ENCODE measurements at regions of chr7 and their contacts with region 1.

Region 1: GRCh38 chr7:150974468-150975391 is 3.4 kb downstream of the KCNH2 start:
- DNase-seq: peak; percentile 70 to 90 (median 80)
- ATAC-seq: peak; percentile 77
- H3K4me3 ChIP-seq: peak overlapping the region; percentile 63 to 69
- H3K4me3 Mint-ChIP-seq: peak overlapping the region; percentile 84
- H3K27ac ChIP-seq: peak overlapping the region; percentile 24 to 82
- H3K27ac Mint-ChIP-seq: peak overlapping the region; percentile 89
- H3K4me1 ChIP-seq: peaks cover 43% of the 10 kb centered on the region
- H3K4me1 Mint-ChIP-seq: peaks cover 38% of the 10 kb centered on the region
- H3K27me3 ChIP-seq: peaks cover 17 to 20% of the 10 kb centered on the region in 2 experiments
- H3K27me3 Mint-ChIP-seq: peaks cover 18% of the 10 kb centered on the region
- CTCF ChIP-seq: peak; percentile 24

Region 2: DNA sequence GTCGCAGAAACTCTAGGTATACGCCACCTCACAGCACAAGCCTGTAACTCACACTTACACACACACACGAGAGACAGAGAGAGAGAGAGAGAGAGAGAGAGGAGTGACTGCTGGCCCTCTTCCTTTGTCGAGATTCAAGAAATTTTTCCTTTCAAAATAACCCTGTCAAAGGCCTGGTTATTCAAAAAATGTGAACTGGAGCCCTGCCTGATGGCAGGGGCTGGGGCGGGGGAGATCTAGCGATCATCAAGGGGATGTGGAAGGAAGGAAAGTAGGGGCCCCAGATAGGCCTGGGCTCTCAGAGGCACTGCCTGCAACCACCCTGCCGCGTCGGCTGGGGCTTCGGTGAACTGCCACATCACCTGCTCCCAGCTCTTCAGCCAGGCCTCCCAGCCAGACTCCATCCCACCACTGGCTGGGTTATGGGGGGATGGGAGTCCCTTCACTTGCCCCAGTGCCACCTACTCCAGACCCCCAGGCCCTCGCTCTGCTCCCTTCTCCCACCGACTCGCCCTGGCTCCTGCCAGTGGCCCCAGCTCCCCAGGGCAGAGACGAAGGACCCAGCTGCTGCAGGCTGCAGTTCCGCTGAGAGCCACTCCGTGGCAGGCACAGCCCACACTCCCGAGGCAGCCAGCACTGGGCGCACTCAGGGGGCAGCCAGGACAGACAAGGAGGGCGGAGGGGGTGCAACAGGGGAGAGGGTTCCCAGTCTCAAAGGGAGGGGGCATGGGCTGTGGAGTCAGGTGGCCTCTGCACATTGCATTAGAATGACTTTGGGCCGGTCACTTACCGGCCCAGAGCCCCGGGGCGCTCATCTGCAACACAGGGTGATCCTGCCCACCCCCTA is 12.0 kb before region 1 on chr7:
- CTCF ChIA-PET with region 1: interaction called, 10 read pairs
- POLR2A ChIA-PET with region 1: interaction called, 3 read pairs
- intact Hi-C with region 1: no loop called
- DNase-seq: peak in 8 of 9 experiments; percentile 40 to 76 (median 66)
- ATAC-seq: peak; percentile 96
- H3K4me3 ChIP-seq: no peak overlapping the region
- H3K4me3 Mint-ChIP-seq: no peak overlapping the region
- H3K27ac ChIP-seq: no peak overlapping the region
- H3K27ac Mint-ChIP-seq: no peak overlapping the region
- H3K4me1 ChIP-seq: peaks cover 5% of the 10 kb centered on the region
- H3K4me1 Mint-ChIP-seq: peaks cover 6% of the 10 kb centered on the region
- H3K27me3 ChIP-seq: peaks cover 6 to 9% of the 10 kb centered on the region in 2 experiments
- H3K27me3 Mint-ChIP-seq: peaks cover 24% of the 10 kb centered on the region
- CTCF ChIP-seq: peak; percentile 86

Region 3: GRCh38 chr7:150998341-150998740 is 23.6 kb after region 1 on chr7:
- CTCF ChIA-PET with region 1: no interaction called
- POLR2A ChIA-PET with region 1: no interaction called
- intact Hi-C with region 1: no loop called
- DNase-seq: no peak
- ATAC-seq: no peak
- H3K4me3 ChIP-seq: no peak overlapping the region
- H3K4me3 Mint-ChIP-seq: no peak overlapping the region
- H3K27ac ChIP-seq: no peak overlapping the region
- H3K27ac Mint-ChIP-seq: no peak overlapping the region
- H3K4me1 ChIP-seq: peaks cover 59% of the 10 kb centered on the region
- H3K4me1 Mint-ChIP-seq: peaks cover 38% of the 10 kb centered on the region
- H3K27me3 ChIP-seq: peaks cover 0 to 2% of the 10 kb centered on the region in 2 experiments
- H3K27me3 Mint-ChIP-seq: no peaks in the 10 kb centered on the region
- CTCF ChIP-seq: no peak

Region 4: GRCh38 chr7:151028131-151028947 is 53.6 kb after region 1 on chr7 and contains the start of gene ABCB8:
- CTCF ChIA-PET with region 1: no interaction called
- POLR2A ChIA-PET with region 1: interaction called, 4 read pairs
- intact Hi-C with region 1: loop called in 1 of 2 experiments (anchors 1 kb)
- DNase-seq: peak; percentile 93 to 99 (median 98)
- ATAC-seq: peak; percentile 92
- H3K4me3 ChIP-seq: peak within 1 kb of the TSS; percentile 67 to 75
- H3K4me3 Mint-ChIP-seq: peak within 1 kb of the TSS; percentile 96
- H3K27ac ChIP-seq: peak within 1 kb of the TSS; percentile 94 to 96
- H3K27ac Mint-ChIP-seq: peak within 1 kb of the TSS; percentile 99
- H3K4me1 ChIP-seq: peaks cover 12% of the 10 kb centered on the region
- H3K4me1 Mint-ChIP-seq: peaks cover 24% of the 10 kb centered on the region
- H3K27me3 ChIP-seq: no peaks in the 10 kb centered on the region
- H3K27me3 Mint-ChIP-seq: no peaks in the 10 kb centered on the region
- CTCF ChIP-seq: peak; percentile 35
- total RNA-seq, gene ABCB8: 43.6 to 49.3 TPM

Region 5: GRCh38 chr7:151085691-151086620 is 111.2 kb after region 1 on chr7 and contains the start of gene AGAP3:
- CTCF ChIA-PET with region 1: no interaction called
- POLR2A ChIA-PET with region 1: no interaction called
- intact Hi-C with region 1: loop called (anchors 1 to 10 kb)
- DNase-seq: peak in 7 of 9 experiments; percentile 30 to 71 (median 57)
- ATAC-seq: no peak
- H3K4me3 ChIP-seq: peak within 1 kb of the TSS; percentile 65 to 80
- H3K4me3 Mint-ChIP-seq: peak within 1 kb of the TSS; percentile 88
- H3K27ac ChIP-seq: peak within 1 kb of the TSS in 1 of 2 experiments; percentile 51
- H3K27ac Mint-ChIP-seq: peak within 1 kb of the TSS; percentile 85
- H3K4me1 ChIP-seq: peaks cover 58% of the 10 kb centered on the region
- H3K4me1 Mint-ChIP-seq: peaks cover 44% of the 10 kb centered on the region
- H3K27me3 ChIP-seq: no peaks in the 10 kb centered on the region
- H3K27me3 Mint-ChIP-seq: peaks cover 21% of the 10 kb centered on the region
- CTCF ChIP-seq: no peak
- total RNA-seq, gene AGAP3: 35.0 to 36.6 TPM